Right cardiac atrium (tissue), 5 donors: ENCODE measurements at regions of chr10 and their contacts with region 1.

Region 1: GRCh38 chr10:112282086-112282485 is 1.1 kb upstream of the TECTB start:
- DNase-seq: no peak
- ATAC-seq: no peak
- H3K4me3 ChIP-seq: no peak overlapping the region
- H3K27ac ChIP-seq: no peak overlapping the region
- H3K4me1 ChIP-seq: no peaks in the 10 kb centered on the region
- H3K27me3 ChIP-seq: no peaks in the 10 kb centered on the region

Region 2: DNA sequence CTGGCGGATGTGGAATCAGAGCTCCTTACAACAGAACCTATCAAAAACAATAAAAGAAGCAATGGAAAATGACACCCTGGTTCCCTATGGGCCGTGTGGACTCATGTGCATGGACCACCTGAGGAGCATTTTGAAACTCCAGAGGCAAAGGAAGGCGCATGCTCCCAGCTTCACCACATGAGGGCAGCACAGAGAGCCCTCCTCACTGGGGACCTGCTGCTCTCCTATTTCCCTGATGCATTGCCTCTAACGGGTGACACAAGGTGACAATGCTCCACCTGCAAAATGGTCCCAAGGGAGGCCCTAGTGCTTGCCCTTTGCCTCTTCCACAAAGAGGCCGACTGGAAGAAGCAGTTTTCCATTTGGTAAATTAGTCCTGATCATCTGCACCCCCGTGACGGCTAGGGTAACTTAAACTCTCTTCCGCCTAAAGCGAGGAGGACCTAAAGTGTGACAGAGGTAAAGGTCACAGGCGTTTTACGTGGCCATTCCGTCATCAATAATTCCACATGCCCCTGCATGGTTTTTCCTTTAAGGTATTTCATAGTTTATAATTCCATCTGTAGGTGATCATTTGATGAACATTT is 166.2 kb before region 1 on chr10:
- intact Hi-C with region 1: no loop called
- DNase-seq: no peak
- ATAC-seq: no peak
- H3K4me3 ChIP-seq: no peak overlapping the region
- H3K27ac ChIP-seq: no peak overlapping the region
- H3K4me1 ChIP-seq: no peaks in the 10 kb centered on the region
- H3K27me3 ChIP-seq: no peaks in the 10 kb centered on the region

Region 3: GRCh38 chr10:112243713-112244112 is 38.4 kb before region 1 on chr10:
- intact Hi-C with region 1: loop called in 1 of 4 experiments (anchors 2 kb)
- DNase-seq: no peak
- ATAC-seq: no peak
- H3K4me3 ChIP-seq: no peak overlapping the region
- H3K27ac ChIP-seq: no peak overlapping the region
- H3K4me1 ChIP-seq: no peaks in the 10 kb centered on the region
- H3K27me3 ChIP-seq: no peaks in the 10 kb centered on the region

Region 4: GRCh38 chr10:112314822-112315474 is 32.9 kb after region 1 on chr10:
- intact Hi-C with region 1: no loop called
- DNase-seq: peak; percentile 79 to 92 (median 86)
- ATAC-seq: peak; percentile 87 to 90
- H3K4me3 ChIP-seq: no peak overlapping the region
- H3K27ac ChIP-seq: no peak overlapping the region
- H3K4me1 ChIP-seq: no peaks in the 10 kb centered on the region
- H3K27me3 ChIP-seq: no peaks in the 10 kb centered on the region